ENCODE measurements at regions of chr10 and their contacts with region 1.

Region 1: DNA sequence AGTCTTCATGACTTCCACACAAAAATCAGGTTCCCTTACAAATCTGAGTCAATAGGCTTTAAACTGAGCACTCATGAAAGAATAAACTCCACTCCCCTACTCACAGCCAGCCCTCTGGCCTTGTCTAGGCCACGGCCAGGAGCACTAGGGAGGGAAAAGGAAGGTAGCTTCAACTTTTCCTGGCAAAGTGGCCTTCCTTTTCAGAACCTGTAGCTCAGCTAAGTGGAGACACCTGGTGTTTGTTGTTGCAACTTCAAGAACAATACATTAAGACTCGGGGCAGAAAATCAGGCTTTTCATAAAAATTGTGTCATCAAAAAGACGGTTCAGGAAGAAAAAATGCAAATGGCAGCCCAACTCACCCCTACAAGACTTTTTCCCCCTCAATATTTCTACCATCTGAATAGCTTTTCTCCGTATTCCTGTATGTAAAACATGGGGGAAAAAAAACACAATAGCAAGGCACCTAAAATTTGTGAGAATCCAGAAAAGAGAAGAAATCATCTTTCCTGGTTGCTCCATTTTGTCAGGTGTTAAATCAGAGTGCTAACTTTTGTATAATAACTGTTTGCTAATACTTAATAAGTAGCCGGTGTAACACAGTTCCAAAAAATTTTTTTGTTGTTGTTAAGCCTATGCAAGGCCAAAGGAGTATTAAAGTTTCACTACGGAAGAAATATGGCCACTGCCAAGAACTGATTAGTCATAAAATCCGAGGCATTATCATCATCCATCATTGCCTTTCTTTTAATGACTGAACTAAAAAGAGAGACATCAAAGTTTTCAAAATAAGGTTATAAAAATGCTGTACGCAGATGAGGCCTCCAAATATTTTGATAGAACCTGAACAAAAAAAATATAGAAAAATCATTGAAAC is 66.2 kb upstream of the ARID5B start:
- DNase-seq: no peak
- H3K4me3 ChIP-seq: no peak overlapping the region
- H3K27ac ChIP-seq: peak overlapping the region; percentile 65 to 78
- H3K4me1 ChIP-seq: peaks cover 14% of the 10 kb centered on the region
- H3K27me3 ChIP-seq: no peaks in the 10 kb centered on the region
- CTCF ChIP-seq: peak in 3 of 4 experiments; percentile 36 to 49 (median 47)
- POLR2A ChIP-seq: no peak

Region 2: DNA sequence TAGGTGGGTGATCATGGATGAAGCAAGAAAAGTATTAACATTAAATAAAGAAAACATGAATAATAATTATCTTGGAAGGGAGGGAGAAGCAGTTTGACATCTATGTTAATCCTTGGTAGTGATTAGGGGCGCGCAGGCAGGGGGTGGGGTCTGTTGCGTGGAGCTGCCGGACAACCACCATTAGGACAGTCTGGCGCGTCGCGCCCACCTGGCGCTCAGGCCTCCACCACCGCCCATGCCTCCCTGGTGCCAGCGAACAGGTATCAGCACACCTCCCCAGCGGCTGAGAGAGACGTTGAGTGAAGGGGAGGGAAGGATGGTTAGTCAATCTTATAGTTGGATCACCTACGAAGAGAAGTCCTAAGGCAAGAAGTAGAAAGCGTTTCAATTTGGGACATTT is 1151.2 kb before region 1 on chr10:
- intact Hi-C with region 1: no loop called
- DNase-seq: no peak
- H3K4me3 ChIP-seq: no peak overlapping the region
- H3K27ac ChIP-seq: no peak overlapping the region
- H3K4me1 ChIP-seq: no peaks in the 10 kb centered on the region
- H3K27me3 ChIP-seq: no peaks in the 10 kb centered on the region
- CTCF ChIP-seq: no peak
- POLR2A ChIP-seq: no peak

Region 3: DNA sequence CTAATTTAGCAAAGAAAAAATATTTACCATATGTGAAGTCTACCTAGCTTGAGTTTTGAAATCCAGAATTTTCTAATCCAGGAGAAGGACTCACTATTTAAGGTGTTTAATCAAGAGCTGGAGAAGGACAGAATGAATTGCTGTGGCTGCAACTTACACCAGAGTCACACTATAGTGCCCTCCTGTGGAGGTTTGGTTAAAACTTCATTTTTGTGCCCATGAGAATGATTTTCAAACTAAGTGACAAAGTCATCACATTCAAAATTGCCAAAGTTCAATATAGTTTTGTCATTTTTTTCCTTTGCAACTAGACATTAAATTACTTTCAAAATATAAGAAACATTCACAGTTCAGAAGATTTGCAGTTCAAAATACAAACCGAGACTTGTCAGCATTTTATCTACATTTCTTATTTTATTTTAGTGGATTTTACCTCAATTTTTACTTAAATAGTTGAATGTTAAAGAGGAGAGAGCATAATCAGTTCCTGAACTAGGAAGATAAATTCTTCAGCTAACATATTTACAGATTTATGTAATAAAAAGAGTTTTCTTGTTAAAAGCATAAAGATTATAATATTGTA is 101.9 kb before region 1 on chr10:
- intact Hi-C with region 1: loop called (anchors 5 kb)
- DNase-seq: peak; percentile 51
- H3K4me3 ChIP-seq: no peak overlapping the region
- H3K27ac ChIP-seq: no peak overlapping the region
- H3K4me1 ChIP-seq: no peaks in the 10 kb centered on the region
- H3K27me3 ChIP-seq: no peaks in the 10 kb centered on the region
- CTCF ChIP-seq: peak; percentile 11 to 73 (median 62)
- POLR2A ChIP-seq: no peak

Region 4: GRCh38 chr10:61896854-61897661 is 61.8 kb after region 1 on chr10:
- intact Hi-C with region 1: loop called (anchors 5 kb)
- DNase-seq: no peak
- H3K4me3 ChIP-seq: no peak overlapping the region
- H3K27ac ChIP-seq: peak overlapping the region in 1 of 2 donors; percentile 8
- H3K4me1 ChIP-seq: peaks cover 5% of the 10 kb centered on the region
- H3K27me3 ChIP-seq: no peaks in the 10 kb centered on the region
- CTCF ChIP-seq: peak; percentile 17 to 47 (median 40)
- POLR2A ChIP-seq: no peak

Region 5: DNA sequence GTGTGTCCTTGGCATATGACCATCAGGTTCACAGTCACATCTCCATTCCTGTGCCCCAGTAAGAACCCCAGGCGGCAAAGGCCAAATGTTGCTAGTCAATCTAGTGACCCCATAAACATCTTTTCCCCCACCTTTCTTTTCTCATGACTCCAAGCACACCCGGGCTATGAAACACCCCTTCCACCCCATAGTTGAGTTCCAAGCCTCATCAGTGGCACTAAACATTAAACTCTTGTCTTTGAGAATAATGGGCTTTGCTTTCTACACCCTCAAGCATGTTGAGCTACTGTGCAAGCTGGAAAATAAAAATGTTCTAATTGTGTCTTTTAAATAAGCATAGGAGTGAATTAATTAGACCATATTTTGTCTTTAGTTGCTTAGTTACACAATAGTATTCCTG is 75.6 kb after region 1 on chr10:
- intact Hi-C with region 1: no loop called
- DNase-seq: no peak
- H3K4me3 ChIP-seq: no peak overlapping the region
- H3K27ac ChIP-seq: no peak overlapping the region
- H3K4me1 ChIP-seq: peaks cover 3% of the 10 kb centered on the region
- H3K27me3 ChIP-seq: no peaks in the 10 kb centered on the region
- CTCF ChIP-seq: no peak
- POLR2A ChIP-seq: no peak

Region 6: GRCh38 chr10:61970182-61971002 is 135.1 kb after region 1 on chr10:
- intact Hi-C with region 1: no loop called
- DNase-seq: no peak
- H3K4me3 ChIP-seq: no peak overlapping the region
- H3K27ac ChIP-seq: peak overlapping the region; percentile 0 to 32
- H3K4me1 ChIP-seq: peaks cover 6% of the 10 kb centered on the region
- H3K27me3 ChIP-seq: no peaks in the 10 kb centered on the region
- CTCF ChIP-seq: no peak
- POLR2A ChIP-seq: no peak